PC-9 (cell line): ENCODE measurements at regions of chr4 and their contacts with region 1.

Region 1: GRCh38 chr4:146428298-146428697 is 93.4 kb downstream of the SLC10A7 start:
- DNase-seq: no peak
- H3K4me3 ChIP-seq: no peak overlapping the region
- H3K27ac ChIP-seq: no peak overlapping the region
- H3K4me1 ChIP-seq: no peaks in the 10 kb centered on the region
- H3K27me3 ChIP-seq: no peaks in the 10 kb centered on the region
- CTCF ChIP-seq: no peak

Region 2: DNA sequence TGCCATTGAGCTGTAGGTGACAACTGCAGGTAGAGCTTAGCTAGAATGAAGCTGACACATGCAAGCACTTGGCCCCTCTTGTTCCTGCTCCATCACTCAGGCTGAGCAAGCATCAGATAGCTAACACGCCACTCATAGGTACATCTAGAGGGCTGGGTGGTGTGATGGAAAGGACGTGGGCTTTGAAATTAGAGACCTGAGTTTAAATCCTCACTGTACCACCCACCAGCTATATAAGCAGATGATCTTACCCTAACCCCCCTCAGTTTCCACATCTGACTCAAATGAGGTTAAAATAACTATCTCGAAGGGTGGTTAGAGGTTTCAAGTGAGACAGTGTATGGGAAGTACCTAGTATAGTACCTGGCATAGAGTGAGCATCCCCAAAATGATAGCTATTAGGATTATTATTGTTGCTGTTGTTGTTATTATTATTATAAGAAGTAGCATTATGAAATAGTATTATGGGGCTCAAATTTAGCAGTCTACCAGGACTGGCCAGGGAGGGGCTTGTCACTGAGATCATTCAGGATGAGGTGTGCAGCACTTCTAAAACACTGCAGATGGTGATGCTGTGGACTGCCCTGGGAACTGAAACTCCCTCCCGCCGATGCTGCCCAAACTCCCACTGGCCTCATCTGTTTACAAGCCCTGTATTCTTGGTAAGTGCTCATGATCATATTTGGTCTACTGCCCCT is 154.9 kb before region 1 on chr4:
- CTCF ChIA-PET with region 1: no interaction called
- POLR2A ChIA-PET with region 1: no interaction called
- intact Hi-C with region 1: no loop called
- DNase-seq: no peak
- H3K4me3 ChIP-seq: no peak overlapping the region
- H3K27ac ChIP-seq: no peak overlapping the region
- H3K4me1 ChIP-seq: no peaks in the 10 kb centered on the region
- H3K27me3 ChIP-seq: no peaks in the 10 kb centered on the region
- CTCF ChIP-seq: no peak

Region 3: DNA sequence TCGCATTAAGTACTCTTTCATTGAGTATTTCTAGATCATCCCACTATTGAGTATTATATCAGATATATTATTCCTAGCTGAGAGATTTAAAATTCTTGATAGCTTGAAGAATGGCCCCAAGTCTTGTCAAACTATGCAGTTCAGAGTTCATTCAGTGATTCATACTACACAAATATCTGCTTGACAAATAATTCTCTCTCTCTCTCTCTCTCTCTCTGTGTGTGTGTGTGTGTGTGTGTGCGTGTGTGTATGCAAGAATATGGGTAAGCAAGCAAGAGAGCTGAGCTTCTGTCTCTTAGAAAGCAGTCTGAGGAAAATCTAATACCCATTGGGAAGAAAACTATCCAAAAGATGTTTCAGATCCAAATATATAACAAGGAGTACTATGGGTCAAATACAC is 48.6 kb before region 1 on chr4:
- CTCF ChIA-PET with region 1: no interaction called
- POLR2A ChIA-PET with region 1: interaction called, 18 read pairs
- intact Hi-C with region 1: no loop called
- DNase-seq: no peak
- H3K4me3 ChIP-seq: no peak overlapping the region
- H3K27ac ChIP-seq: no peak overlapping the region
- H3K4me1 ChIP-seq: no peaks in the 10 kb centered on the region
- H3K27me3 ChIP-seq: no peaks in the 10 kb centered on the region
- CTCF ChIP-seq: no peak